ENCODE measurements at regions of chrX and their contacts with region 1.

Region 1: GRCh38 chrX:119004920-119005524 is 30.6 kb downstream of the LONRF3 start:
- DNase-seq: peak; percentile 35
- ATAC-seq: peak; percentile 84
- H3K4me3 Mint-ChIP-seq: no peak overlapping the region
- H3K27ac Mint-ChIP-seq: no peak overlapping the region
- H3K4me1 Mint-ChIP-seq: no peaks in the 10 kb centered on the region
- H3K27me3 Mint-ChIP-seq: peaks cover 3% of the 10 kb centered on the region
- CTCF ChIP-seq: peak; percentile 17

Region 2: GRCh38 chrX:118847676-118848075 is 157.3 kb before region 1 on chrX:
- CTCF ChIA-PET with region 1: interaction called, 11 read pairs
- POLR2A ChIA-PET with region 1: no interaction called
- intact Hi-C with region 1: loop called (anchors 1 kb)
- DNase-seq: no peak
- ATAC-seq: no peak
- H3K4me3 Mint-ChIP-seq: no peak overlapping the region
- H3K27ac Mint-ChIP-seq: no peak overlapping the region
- H3K4me1 Mint-ChIP-seq: no peaks in the 10 kb centered on the region
- H3K27me3 Mint-ChIP-seq: no peaks in the 10 kb centered on the region
- CTCF ChIP-seq: no peak

Region 3: GRCh38 chrX:119015407-119016237 is 10.6 kb after region 1 on chrX:
- CTCF ChIA-PET with region 1: interaction called, 8 read pairs
- POLR2A ChIA-PET with region 1: no interaction called
- intact Hi-C with region 1: loop called (anchors 1 kb)
- DNase-seq: peak; percentile 23
- ATAC-seq: peak; percentile 90
- H3K4me3 Mint-ChIP-seq: peak overlapping the region; percentile 53
- H3K27ac Mint-ChIP-seq: peak overlapping the region; percentile 94
- H3K4me1 Mint-ChIP-seq: peaks cover 28% of the 10 kb centered on the region
- H3K27me3 Mint-ChIP-seq: no peaks in the 10 kb centered on the region
- CTCF ChIP-seq: no peak

Region 4: GRCh38 chrX:119067023-119067739 is 62.2 kb after region 1 on chrX:
- CTCF ChIA-PET with region 1: interaction called, 44 read pairs
- POLR2A ChIA-PET with region 1: interaction called, 6 read pairs
- intact Hi-C with region 1: loop called (anchors 1 kb)
- DNase-seq: no peak
- ATAC-seq: peak; percentile 85
- H3K4me3 Mint-ChIP-seq: no peak overlapping the region
- H3K27ac Mint-ChIP-seq: no peak overlapping the region
- H3K4me1 Mint-ChIP-seq: no peaks in the 10 kb centered on the region
- H3K27me3 Mint-ChIP-seq: no peaks in the 10 kb centered on the region
- CTCF ChIP-seq: no peak

Region 5: GRCh38 chrX:119118780-119119395 is 113.9 kb after region 1 on chrX:
- CTCF ChIA-PET with region 1: no interaction called
- POLR2A ChIA-PET with region 1: no interaction called
- intact Hi-C with region 1: loop called (anchors 5 kb)
- DNase-seq: peak; percentile 14
- ATAC-seq: peak; percentile 86
- H3K4me3 Mint-ChIP-seq: no peak overlapping the region
- H3K27ac Mint-ChIP-seq: no peak overlapping the region
- H3K4me1 Mint-ChIP-seq: no peaks in the 10 kb centered on the region
- H3K27me3 Mint-ChIP-seq: peaks cover 2% of the 10 kb centered on the region
- CTCF ChIP-seq: no peak

Region 6: DNA sequence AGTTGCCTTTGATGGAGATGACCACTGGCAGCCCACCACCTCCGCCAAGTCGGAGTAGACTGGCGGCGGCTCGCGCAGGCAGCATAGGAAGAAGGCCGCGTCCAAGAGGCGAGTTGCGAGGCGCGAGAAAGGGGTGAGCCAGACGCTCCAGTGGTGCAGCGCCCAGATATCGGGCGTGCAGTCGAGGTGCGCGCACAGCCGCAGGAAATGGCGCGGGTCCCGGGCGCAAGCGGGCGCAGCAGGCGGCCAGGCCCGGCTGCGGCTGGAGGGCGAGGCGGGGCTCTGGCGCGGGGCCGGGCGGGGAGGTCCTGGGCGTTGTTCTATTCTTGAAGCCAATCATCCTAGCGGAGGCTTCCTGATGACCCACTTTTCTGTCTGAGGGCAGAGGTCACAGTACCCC is 217.9 kb after region 1 on chrX:
- CTCF ChIA-PET with region 1: no interaction called
- POLR2A ChIA-PET with region 1: no interaction called
- intact Hi-C with region 1: loop called (anchors 1 kb)
- DNase-seq: no peak
- ATAC-seq: no peak
- H3K4me3 Mint-ChIP-seq: no peak overlapping the region
- H3K27ac Mint-ChIP-seq: no peak overlapping the region
- H3K4me1 Mint-ChIP-seq: no peaks in the 10 kb centered on the region
- H3K27me3 Mint-ChIP-seq: peaks cover 11% of the 10 kb centered on the region
- CTCF ChIP-seq: no peak

Region 7: GRCh38 chrX:119240356-119240755 is 235.3 kb after region 1 on chrX:
- CTCF ChIA-PET with region 1: no interaction called
- POLR2A ChIA-PET with region 1: no interaction called
- intact Hi-C with region 1: no loop called
- DNase-seq: no peak
- ATAC-seq: no peak
- H3K4me3 Mint-ChIP-seq: no peak overlapping the region
- H3K27ac Mint-ChIP-seq: no peak overlapping the region
- H3K4me1 Mint-ChIP-seq: peaks cover 16% of the 10 kb centered on the region
- H3K27me3 Mint-ChIP-seq: no peaks in the 10 kb centered on the region
- CTCF ChIP-seq: no peak

Region 8: GRCh38 chrX:120755066-120755846 is 1750.2 kb after region 1 on chrX:
- CTCF ChIA-PET with region 1: no interaction called
- POLR2A ChIA-PET with region 1: no interaction called
- intact Hi-C with region 1: no loop called
- DNase-seq: peak; percentile 23
- ATAC-seq: peak; percentile 79
- H3K4me3 Mint-ChIP-seq: peak overlapping the region; percentile 3
- H3K27ac Mint-ChIP-seq: peak overlapping the region; percentile 90
- H3K4me1 Mint-ChIP-seq: peaks cover 88% of the 10 kb centered on the region
- H3K27me3 Mint-ChIP-seq: no peaks in the 10 kb centered on the region
- CTCF ChIP-seq: no peak

Measured in activated B cell treated with CpG ODN at 0.5 μM for 24 hours (primary cell).